Dendritic cell treated with granulocyte-macrophage colony-stimulating factor and Interleukin-4, amounts not matched to agents 40 ng/mL and 50 ng/mL, for 4 days (primary cell): ENCODE measurements at regions of chr12 and their contacts with region 1.

Region 1: GRCh38 chr12:53352331-53353256 is 16.4 kb upstream of the SP7 start:
- H3K4me3 Mint-ChIP-seq: peak overlapping the region; percentile 45
- H3K27ac Mint-ChIP-seq: peak overlapping the region; percentile 23
- H3K4me1 Mint-ChIP-seq: peaks cover 37% of the 10 kb centered on the region
- H3K27me3 Mint-ChIP-seq: no peaks in the 10 kb centered on the region

Region 2: DNA sequence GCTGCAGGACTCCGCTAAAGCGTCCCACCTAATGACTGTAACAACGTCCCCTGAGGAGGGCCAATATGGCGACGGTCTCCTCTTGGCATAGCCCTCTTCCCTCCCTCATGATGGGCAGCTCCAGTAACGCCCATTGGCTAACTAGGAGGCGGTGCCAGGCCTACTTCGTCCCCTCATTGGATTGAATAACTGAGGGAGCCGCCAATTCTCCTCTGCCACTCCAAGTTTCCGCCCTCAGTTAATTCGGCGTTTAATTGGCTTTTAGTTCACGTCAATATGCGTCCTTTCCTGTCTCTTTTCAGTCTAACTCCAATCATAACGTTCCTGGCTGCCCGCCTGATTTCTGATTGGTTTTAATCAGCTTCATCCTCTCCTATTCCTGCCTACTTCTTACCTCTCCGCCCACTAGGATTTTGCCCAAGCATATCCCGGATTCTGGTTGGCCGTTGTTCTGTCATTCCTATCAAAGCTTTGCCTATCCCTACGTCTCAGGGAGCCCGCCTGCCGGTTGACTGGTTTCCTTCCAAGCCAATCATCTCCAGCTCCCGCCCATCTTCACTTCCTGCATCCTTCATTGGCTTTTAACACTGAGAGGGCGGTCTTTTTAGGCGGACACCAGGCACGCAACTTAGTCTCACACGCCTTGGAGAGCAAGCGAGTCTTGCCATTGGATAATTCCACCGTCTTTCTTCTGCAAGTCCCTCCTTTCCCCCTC is 27.0 kb after region 1 on chr12:
- intact Hi-C with region 1: loop called (anchors 1 kb)
- H3K4me3 Mint-ChIP-seq: no peak overlapping the region
- H3K27ac Mint-ChIP-seq: no peak overlapping the region
- H3K4me1 Mint-ChIP-seq: peaks cover 48% of the 10 kb centered on the region
- H3K27me3 Mint-ChIP-seq: no peaks in the 10 kb centered on the region

Region 3: DNA sequence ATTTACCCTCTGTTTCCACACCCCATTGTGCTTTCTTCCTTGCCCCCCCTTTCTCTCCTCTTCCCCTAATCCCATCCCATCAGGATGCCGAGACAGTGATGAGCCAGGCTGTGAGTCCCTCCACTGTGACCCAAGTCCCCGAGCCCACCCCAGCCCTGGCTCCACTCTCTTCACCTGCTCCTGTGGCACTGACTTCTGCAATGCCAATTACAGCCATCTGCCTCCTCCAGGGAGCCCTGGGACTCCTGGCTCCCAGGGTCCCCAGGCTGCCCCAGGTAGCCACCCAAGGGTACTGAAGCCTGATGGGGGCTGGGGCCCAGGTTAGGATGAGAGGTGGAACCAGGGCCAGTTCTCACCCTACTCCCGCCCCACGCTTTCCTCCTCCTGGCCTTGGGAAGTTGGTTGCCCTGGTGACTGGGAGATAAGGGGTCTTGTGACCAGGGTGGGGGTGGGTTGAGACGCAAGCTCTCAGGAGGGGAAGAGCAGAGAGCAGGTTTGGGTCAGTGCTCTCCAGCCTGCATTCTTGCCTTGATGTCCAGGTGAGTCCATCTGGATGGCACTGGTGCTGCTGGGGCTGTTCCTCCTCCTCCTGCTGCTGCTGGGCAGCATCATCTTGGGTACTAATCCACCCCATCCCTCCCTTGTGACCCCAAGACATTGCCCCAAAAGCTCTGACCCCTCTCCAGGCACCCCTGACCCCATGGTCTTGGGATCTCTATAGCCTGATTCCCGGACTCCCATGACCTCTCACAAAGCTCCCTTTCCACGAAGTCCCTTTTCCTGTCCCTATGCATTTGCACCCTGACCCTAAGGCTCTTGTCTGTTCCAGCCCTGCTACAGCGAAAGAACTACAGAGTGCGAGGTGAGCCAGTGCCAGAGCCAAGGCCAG is 72.3 kb after region 1 on chr12:
- intact Hi-C with region 1: loop called (anchors 1 kb)
- H3K4me3 Mint-ChIP-seq: no peak overlapping the region
- H3K27ac Mint-ChIP-seq: no peak overlapping the region
- H3K4me1 Mint-ChIP-seq: peaks cover 14% of the 10 kb centered on the region
- H3K27me3 Mint-ChIP-seq: peaks cover 21% of the 10 kb centered on the region

Region 4: GRCh38 chr12:53508534-53509199 is 156.1 kb after region 1 on chr12:
- intact Hi-C with region 1: loop called (anchors 1 kb)
- H3K4me3 Mint-ChIP-seq: no peak overlapping the region
- H3K27ac Mint-ChIP-seq: peak overlapping the region; percentile 29
- H3K4me1 Mint-ChIP-seq: peaks cover 21% of the 10 kb centered on the region
- H3K27me3 Mint-ChIP-seq: no peaks in the 10 kb centered on the region